ENCODE measurements at regions of chr11 and their contacts with region 1.

Region 1: DNA sequence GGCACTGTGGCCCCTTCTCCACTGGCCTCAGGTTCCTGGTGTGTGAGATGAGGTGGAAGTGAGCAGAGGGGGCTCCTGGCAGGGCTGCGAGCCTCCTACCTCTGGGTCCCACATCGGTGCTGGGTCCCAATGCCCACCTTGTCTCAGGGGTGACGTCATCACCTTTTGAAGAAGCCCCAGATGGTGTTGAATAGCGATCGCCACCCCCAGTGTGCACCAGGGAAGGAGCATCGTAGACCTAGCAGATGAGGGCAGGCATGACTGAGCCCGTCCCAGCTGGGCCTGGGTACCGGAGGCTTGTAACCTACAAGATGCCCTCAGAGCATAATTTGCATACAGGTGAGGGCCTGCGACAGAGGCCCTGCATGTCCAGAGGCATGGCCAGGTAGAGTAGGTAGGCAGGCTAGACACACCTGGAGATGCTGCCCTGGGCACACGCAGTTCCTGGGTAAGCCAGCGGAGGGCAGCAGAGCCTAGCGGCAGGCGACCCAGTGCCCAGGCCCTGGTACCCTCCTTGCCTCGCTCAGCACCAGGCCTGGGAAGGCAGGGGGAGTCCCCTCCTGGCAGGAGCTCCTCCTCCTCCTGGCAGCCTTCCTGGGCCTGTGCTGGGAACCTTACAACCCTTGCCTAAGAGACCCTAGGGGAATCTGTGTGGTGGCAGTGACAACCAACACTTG is 52.5 kb downstream of the TPCN2 start:
- DNase-seq: peak; percentile 81
- H3K4me3 Mint-ChIP-seq: no peak overlapping the region
- H3K27ac Mint-ChIP-seq: no peak overlapping the region
- H3K4me1 Mint-ChIP-seq: peaks cover 4% of the 10 kb centered on the region
- H3K27me3 Mint-ChIP-seq: peaks cover 3% of the 10 kb centered on the region

Region 2: DNA sequence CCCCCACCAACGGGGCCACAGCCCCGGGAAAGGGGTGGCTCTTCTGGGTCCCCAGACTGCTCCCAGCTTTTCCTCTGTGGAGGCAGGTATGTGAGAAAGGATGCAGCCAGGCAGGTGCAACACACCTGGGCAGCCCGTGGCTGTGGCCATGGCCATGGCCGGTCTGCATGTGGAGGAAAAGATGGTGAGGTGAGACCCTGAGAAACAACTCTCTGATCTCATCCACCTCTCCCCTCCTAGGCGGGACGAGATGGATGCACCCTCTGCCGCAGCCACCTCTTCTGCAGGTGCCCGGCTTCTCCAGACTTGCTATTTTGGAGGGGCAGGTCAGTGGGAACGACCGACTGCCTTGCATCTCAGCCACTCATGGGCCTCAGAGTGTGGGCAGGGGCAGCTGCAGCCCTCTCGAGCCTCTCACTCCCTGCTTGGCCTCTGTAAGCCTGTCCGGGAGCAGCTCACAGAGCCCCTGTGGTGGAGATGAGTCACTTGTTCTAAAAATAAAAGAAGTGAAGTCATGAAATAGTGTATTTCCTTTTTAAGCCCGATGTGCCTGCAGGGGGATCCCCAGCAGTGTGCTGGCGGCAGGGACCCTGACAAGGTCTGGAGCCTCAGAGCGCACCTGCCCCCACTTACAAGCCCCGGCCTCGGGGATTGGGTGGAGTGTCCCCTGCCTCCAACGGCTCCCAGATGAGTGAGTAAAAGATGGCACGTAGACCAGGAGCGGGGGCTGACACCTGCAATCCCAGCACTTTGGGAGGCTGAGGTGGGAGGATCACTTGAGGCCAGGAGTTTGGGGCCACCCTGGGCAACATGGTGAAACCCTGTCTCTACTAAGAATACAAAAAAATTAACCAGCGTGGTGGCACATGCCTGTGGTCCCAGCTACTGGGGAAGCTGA is 65.2 kb after region 1 on chr11:
- CTCF ChIA-PET with region 1: no interaction called
- intact Hi-C with region 1: loop called (anchors 5 kb)
- DNase-seq: peak; percentile 79
- H3K4me3 Mint-ChIP-seq: peak overlapping the region; percentile 27
- H3K27ac Mint-ChIP-seq: peak overlapping the region; percentile 27
- H3K4me1 Mint-ChIP-seq: peaks cover 18% of the 10 kb centered on the region
- H3K27me3 Mint-ChIP-seq: peaks cover 2% of the 10 kb centered on the region

Region 3: DNA sequence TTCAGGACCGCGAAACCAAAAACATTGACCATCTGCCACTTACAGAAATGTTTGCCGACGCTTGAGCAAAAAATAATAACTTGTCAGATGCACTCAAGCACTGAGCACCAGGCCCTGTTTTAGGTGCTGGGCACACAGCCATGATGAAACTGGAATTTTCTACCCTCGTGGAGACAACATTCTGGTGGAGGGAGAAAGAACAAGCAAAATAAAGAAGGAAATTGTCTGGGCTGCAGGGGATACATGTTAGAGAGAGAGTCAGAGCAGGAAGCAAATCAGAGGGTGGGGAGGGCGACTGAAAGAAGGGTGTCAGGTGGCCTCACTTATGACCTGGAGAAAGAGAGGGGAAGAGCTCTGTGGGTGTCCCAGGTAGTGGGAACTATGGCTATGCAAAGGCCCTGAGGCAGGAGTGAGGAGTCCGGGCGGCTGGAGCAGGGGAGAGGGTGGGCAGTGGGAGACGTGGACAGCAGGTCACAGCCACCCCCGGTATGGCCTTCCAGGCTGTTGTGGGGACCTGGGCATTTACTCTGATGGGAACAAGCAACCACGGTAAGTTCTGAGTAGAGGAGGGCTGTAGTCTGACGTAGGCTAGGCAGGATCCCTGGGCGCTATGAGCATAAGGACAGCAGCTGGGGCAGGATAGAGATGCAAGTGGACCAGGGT is 271.5 kb after region 1 on chr11:
- CTCF ChIA-PET with region 1: no interaction called
- intact Hi-C with region 1: no loop called
- DNase-seq: peak; percentile 1
- H3K4me3 Mint-ChIP-seq: no peak overlapping the region
- H3K27ac Mint-ChIP-seq: no peak overlapping the region
- H3K4me1 Mint-ChIP-seq: no peaks in the 10 kb centered on the region
- H3K27me3 Mint-ChIP-seq: no peaks in the 10 kb centered on the region

Region 4: DNA sequence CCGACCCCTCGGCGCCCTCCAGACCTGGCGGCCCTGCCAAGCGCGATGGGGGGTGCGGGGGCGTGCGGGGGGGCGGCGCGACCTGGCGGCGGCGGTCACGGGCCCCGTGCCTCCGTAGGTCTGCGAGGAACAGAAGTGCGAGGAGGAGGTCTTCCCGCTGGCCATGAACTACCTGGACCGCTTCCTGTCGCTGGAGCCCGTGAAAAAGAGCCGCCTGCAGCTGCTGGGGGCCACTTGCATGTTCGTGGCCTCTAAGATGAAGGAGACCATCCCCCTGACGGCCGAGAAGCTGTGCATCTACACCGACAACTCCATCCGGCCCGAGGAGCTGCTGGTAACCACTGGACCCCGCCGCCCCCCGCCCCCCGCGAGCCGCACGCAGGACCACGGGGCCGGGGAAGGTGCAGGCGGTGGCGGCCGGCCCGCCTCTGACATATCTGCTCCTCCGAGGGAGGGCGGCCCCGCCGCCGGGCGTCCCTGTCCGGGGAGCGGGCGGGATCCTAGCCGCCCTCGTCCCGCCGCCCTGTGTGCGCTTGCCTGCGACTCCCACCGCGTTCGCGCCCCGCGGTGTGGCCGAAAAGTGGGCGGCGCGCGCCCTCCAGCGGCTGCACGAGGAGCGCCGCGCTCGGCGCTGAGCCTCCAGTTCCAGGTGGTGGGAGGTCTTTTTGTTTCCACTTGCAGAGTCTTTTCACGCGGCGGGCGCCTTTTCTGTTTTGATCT is 541.8 kb after region 1 on chr11:
- CTCF ChIA-PET with region 1: interaction called, 7 read pairs
- intact Hi-C with region 1: loop called (anchors 1 kb)
- DNase-seq: peak; percentile 71
- H3K4me3 Mint-ChIP-seq: peak overlapping the region; percentile 52
- H3K27ac Mint-ChIP-seq: no peak overlapping the region
- H3K4me1 Mint-ChIP-seq: peaks cover 27% of the 10 kb centered on the region
- H3K27me3 Mint-ChIP-seq: peaks cover 20% of the 10 kb centered on the region

Region 5: GRCh38 chr11:69670158-69670845 is 569.0 kb after region 1 on chr11:
- CTCF ChIA-PET with region 1: interaction called, 8 read pairs
- intact Hi-C with region 1: loop called (anchors 1 kb)
- DNase-seq: peak; percentile 68
- H3K4me3 Mint-ChIP-seq: no peak overlapping the region
- H3K27ac Mint-ChIP-seq: no peak overlapping the region
- H3K4me1 Mint-ChIP-seq: peaks cover 22% of the 10 kb centered on the region
- H3K27me3 Mint-ChIP-seq: no peaks in the 10 kb centered on the region

Measured in activated naive CD4-positive, alpha-beta T cell treated with anti-CD3 and anti-CD28 coated beads for 36 hours (primary cell).